Dendritic cell treated with granulocyte-macrophage colony-stimulating factor and Interleukin-4, amounts not matched to agents 40 ng/mL and 50 ng/mL, for 4 days (primary cell): ENCODE measurements at regions of chr4 and their contacts with region 1.

Region 1: DNA sequence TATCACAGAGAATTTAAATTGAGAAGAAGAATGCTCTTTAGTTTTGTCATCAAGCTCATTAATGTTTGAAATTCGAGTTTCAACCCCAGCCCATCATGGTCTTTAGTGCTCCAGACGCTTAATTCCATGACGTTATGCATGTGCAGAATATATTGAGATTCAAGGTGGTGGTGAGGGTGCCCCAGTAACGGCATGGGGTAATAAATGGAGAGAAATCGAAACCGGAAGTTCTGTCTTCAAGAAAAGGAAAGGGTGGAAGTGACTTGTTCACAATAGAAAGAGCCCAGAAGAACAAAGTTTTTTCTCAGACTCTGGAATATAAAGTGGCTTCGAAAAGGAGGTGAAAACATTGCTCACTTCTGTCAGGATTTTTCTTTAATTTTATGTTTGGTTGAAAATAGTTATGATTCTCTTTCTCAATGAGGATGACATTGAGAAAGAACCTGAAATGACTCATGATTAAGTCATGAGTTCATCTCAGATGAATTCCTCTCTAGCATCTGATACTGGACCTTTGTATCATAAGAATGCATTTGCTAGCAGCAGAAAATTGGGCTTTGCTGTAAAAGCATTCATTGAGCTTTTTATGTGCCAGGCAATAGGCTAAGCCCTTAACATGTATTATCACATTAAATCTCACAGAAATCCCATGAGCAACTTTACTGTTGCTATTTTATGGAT is 779 bp upstream of the DDX60L start:
- H3K4me3 Mint-ChIP-seq: peak overlapping the region; percentile 87
- H3K27ac Mint-ChIP-seq: peak overlapping the region; percentile 95
- H3K4me1 Mint-ChIP-seq: peaks cover 48% of the 10 kb centered on the region
- H3K27me3 Mint-ChIP-seq: no peaks in the 10 kb centered on the region

Region 2: GRCh38 chr4:168503652-168504362 is 22.7 kb after region 1 on chr4:
- intact Hi-C with region 1: loop called (anchors 2 kb)
- H3K4me3 Mint-ChIP-seq: peak overlapping the region; percentile 10
- H3K27ac Mint-ChIP-seq: peak overlapping the region; percentile 77
- H3K4me1 Mint-ChIP-seq: peaks cover 19% of the 10 kb centered on the region
- H3K27me3 Mint-ChIP-seq: no peaks in the 10 kb centered on the region